Posterior vena cava (tissue), 2 donors: ENCODE measurements at regions of chr22 and their contacts with region 1.

Region 1: GRCh38 chr22:19962233-19962908 is 20.8 kb upstream of the TXNRD2 start:
- DNase-seq: peak; percentile 90

Region 2: GRCh38 chr22:19800761-19801244 is 161.6 kb before region 1 on chr22:
- intact Hi-C with region 1: no loop called
- DNase-seq: no peak

Region 3: GRCh38 chr22:19912271-19912999 is 49.9 kb before region 1 on chr22:
- intact Hi-C with region 1: no loop called
- DNase-seq: no peak

Region 4: GRCh38 chr22:20076627-20077172 is 114.3 kb after region 1 on chr22:
- intact Hi-C with region 1: no loop called
- DNase-seq: no peak

Region 5: DNA sequence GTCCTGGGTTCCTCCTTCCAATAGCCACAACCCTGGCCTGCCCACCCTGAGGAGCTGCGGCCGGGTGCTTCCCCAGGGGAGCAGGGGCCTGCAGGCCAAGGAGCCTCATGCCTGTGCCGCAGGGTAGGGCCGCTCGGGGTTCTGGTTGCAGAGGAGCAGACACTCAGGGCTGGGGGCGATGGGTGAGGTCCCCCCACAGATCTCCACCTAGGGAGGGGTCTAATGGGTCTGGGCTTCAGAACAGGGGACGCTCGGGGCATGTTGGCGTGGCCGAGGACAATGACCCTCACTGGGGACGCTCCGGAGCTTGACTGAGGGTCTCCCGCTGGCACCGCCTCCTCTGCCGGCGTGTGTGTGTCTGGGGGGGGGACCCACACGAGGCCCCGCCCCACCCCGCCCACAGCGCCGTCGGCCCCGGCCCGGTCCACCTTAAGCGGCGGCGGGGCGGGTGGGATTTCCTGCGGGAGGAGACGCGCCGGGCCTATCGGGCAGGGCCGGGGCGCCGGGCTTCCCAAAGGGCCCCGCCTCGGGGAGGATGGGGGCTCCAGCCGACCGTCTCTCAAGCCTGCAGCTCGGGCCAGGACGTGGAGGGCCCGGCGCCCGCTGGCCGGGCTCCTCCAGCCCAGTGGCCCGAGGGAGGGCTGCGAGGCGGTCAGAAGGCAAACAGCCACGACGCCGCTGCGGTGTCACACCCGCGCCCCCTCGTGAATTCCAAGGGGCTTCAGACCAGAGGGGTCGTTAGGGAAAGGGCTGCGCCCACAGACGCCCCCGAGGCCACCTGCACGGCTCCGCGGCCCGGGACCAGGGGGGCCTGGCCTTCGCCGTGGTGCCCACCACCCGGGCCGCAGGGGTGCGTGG is 168.6 kb after region 1 on chr22:
- intact Hi-C with region 1: loop called in 1 of 2 experiments (anchors 5 kb)
- DNase-seq: peak; percentile 95